GM12878 (cell line): ENCODE measurements at regions of chr6 and their contacts with region 1.

Region 1: DNA sequence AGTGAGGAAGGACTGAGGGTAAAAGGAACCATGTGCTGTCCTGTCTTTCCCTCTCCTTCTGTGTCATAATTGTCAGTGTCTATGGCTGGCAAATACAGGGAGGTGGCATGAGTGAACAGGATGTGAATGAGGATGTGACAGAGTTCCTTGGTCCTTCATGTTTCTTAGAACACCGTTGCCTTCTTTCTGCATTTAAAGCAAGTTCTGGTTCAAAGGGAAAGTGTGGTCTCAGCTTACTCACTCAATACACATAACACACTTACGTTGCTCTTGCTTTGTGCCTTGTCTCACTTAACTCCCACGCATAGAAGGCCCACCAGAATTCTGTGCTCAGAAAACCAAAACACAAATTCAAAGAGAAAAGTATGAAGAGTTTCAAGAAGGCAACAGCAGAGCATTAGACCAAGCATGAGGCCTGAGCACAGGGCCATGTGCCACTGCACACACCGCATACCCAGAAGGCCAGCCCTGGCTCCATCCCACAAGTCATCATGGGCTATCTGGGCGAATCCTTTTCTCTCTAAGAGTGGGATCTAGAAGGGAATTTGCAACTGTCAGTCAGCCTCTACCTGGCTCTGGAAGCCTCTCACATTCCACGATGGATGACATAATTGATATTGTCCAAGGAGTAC is 38.9 kb upstream of the SAYSD1 start:
- DNase-seq: no peak
- ATAC-seq: no peak
- H3K4me3 ChIP-seq: no peak overlapping the region
- H3K27ac ChIP-seq: no peak overlapping the region
- H3K4me1 ChIP-seq: no peaks in the 10 kb centered on the region
- H3K27me3 ChIP-seq: peaks cover 0 to 2% of the 10 kb centered on the region in 2 experiments; a peak in 2 of 4 replicates
- CTCF ChIP-seq: no peak
- EP300 ChIP-seq: no peak
- POLR2A ChIP-seq: no peak
- RAD21 ChIP-seq: no peak

Region 2: GRCh38 chr6:38702558-38703397 is 451.1 kb before region 1 on chr6 and contains the start of gene GLO1:
- CTCF ChIA-PET with region 1: no interaction called
- POLR2A ChIA-PET with region 1: no interaction called
- RAD21 ChIA-PET with region 1: no interaction called
- SMC1A ChIA-PET with region 1: no interaction called
- in situ Hi-C with region 1: no loop called
- intact Hi-C with region 1: no loop called
- DNase-seq: peak; percentile 96
- ATAC-seq: peak; percentile 100
- H3K4me3 ChIP-seq: peak within 1 kb of the TSS; percentile 91
- H3K27ac ChIP-seq: peak within 1 kb of the TSS; percentile 89
- H3K4me1 ChIP-seq: no peaks in the 10 kb centered on the region
- H3K27me3 ChIP-seq: no peaks in the 10 kb centered on the region
- CTCF ChIP-seq: no peak
- EP300 ChIP-seq: peak in 1 of 2 experiments; percentile 30; a peak in 1 of 4 replicates
- POLR2A ChIP-seq: peak; percentile 100
- RAD21 ChIP-seq: no peak
- polyA plus RNA-seq, gene GLO1: 105 to 133 TPM

Region 3: GRCh38 chr6:38997128-38997761 is 156.6 kb before region 1 on chr6:
- CTCF ChIA-PET with region 1: interaction called, 3 read pairs
- POLR2A ChIA-PET with region 1: no interaction called
- RAD21 ChIA-PET with region 1: no interaction called
- SMC1A ChIA-PET with region 1: interaction called, 3 read pairs
- in situ Hi-C with region 1: no loop called
- intact Hi-C with region 1: loop called (anchors 10 kb)
- DNase-seq: no peak
- ATAC-seq: peak; percentile 51
- H3K4me3 ChIP-seq: no peak overlapping the region
- H3K27ac ChIP-seq: no peak overlapping the region
- H3K4me1 ChIP-seq: no peaks in the 10 kb centered on the region
- H3K27me3 ChIP-seq: no peaks in the 10 kb centered on the region
- CTCF ChIP-seq: peak; percentile 64 to 68 (median 64)
- EP300 ChIP-seq: no peak
- POLR2A ChIP-seq: no peak
- RAD21 ChIP-seq: peak; percentile 70

Region 4: DNA sequence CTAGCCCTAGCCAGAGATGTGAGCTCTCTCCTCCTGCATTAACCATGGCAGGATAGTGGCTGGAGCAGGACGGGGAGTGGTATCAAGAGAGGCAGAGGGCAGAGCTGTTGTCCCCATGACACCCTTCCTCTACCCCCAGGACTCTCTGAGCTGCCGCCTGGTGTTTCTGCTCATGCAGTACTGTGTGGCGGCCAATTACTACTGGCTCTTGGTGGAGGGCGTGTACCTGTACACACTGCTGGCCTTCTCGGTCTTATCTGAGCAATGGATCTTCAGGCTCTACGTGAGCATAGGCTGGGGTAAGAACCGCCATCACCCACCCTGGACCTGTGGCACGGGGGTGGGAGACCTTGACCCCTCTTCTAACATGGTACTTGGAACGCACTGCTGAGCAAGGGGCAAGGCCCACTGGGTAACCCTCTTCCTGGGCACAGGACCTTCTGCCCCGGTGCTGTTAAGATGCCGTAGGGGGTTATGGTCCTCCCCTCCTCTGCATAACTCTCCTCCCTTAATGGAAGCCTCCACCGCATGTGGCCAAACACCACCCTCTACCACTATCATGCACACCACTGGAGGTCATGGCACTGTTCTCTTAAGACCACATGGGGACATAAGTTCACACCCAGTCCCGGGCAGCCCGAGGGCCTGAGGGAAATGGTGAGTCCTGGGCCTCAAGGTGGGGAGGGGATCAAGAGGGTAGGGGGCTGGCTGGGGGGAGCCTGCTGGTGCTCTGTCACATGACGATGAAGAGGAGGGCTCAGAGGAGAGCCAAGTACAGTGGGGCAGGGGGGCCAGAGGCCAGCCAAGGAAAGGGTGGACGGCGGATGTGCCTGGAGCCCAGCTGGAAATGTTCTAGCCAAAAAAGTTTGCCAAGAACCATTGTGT is 80.2 kb before region 1 on chr6:
- CTCF ChIA-PET with region 1: no interaction called
- POLR2A ChIA-PET with region 1: no interaction called
- RAD21 ChIA-PET with region 1: no interaction called
- SMC1A ChIA-PET with region 1: no interaction called
- in situ Hi-C with region 1: no loop called
- intact Hi-C with region 1: no loop called
- DNase-seq: no peak
- ATAC-seq: no peak
- H3K4me3 ChIP-seq: no peak overlapping the region
- H3K27ac ChIP-seq: no peak overlapping the region
- H3K4me1 ChIP-seq: peaks cover 17% of the 10 kb centered on the region; the same call in 1 of the 2 replicates
- H3K27me3 ChIP-seq: no peaks in the 10 kb centered on the region
- CTCF ChIP-seq: no peak
- EP300 ChIP-seq: no peak
- POLR2A ChIP-seq: no peak
- RAD21 ChIP-seq: no peak

Region 5: DNA sequence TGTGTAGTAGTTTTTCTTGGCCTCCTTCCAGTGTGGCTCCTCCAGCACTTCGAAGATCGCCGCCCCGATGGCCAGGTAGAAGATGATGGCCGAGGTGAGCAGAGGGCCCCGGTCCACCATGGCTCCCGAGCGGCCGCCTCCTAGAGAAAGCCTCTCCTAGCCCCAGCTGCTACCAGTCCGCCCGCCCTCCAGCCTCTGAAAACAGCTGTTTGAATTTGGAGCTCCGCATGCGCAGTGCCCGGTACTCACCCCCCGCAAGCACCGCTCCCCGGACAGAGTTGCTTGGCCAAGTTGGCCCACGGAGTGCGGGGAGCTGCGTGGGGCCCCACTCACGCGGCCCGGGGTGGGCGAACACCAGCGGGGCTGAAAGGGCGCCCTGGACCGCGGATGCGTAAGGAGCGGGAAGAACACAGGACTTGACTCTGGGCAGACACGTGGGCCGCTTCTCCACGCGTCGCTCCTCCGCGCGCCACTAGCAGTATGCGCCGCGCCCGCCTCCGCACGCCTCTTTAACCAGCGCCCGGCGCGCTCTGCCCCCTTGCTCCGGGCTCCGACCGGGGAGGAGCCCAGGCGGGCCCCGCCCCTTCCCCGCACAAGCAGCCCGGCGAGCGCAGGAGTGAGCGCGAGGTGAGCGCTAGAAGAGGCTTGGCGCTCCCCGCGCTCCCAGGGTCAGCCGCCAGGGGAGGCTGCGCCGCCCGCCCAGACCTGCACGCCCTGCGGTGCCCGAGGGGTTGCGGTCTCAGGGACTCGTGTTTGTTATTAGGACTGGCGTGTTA is 75.3 kb after region 1 on chr6 and contains the start of gene KCNK5:
- CTCF ChIA-PET with region 1: no interaction called
- POLR2A ChIA-PET with region 1: no interaction called
- RAD21 ChIA-PET with region 1: no interaction called
- SMC1A ChIA-PET with region 1: no interaction called
- in situ Hi-C with region 1: no loop called
- intact Hi-C with region 1: no loop called
- DNase-seq: no peak
- ATAC-seq: peak; percentile 87
- H3K4me3 ChIP-seq: peak within 1 kb of the TSS; percentile 57
- H3K27ac ChIP-seq: no peak within 1 kb of the TSS
- H3K4me1 ChIP-seq: peaks cover 8% of the 10 kb centered on the region; the same call in 1 of the 2 replicates
- H3K27me3 ChIP-seq: peaks cover 0 to 3% of the 10 kb centered on the region in 2 experiments; a peak in 3 of 4 replicates
- CTCF ChIP-seq: peak; percentile 24 to 62 (median 56); a peak in 5 of 6 replicates
- EP300 ChIP-seq: no peak
- POLR2A ChIP-seq: peak; percentile 88
- RAD21 ChIP-seq: 0 out of 2 replicates have a peak, but pooled peaks have one; percentile 6
- polyA plus RNA-seq, gene KCNK5: 0.11 to 0.27 TPM